Endothelial cell of umbilical vein (primary cell): ENCODE measurements at regions of chr19 and their contacts with region 1.

Region 1: GRCh38 chr19:44113138-44113783 is at the start of gene ZNF225:
- DNase-seq: peak; percentile 98
- H3K4me3 ChIP-seq: peak within 1 kb of the TSS; percentile 80 to 94 (median 84)
- H3K27ac ChIP-seq: peak within 1 kb of the TSS; percentile 32
- H3K4me1 ChIP-seq: peaks cover 6% of the 10 kb centered on the region
- H3K27me3 ChIP-seq: no peaks in the 10 kb centered on the region
- CTCF ChIP-seq: no peak
- POLR2A ChIP-seq: peak; percentile 85
- total RNA-seq, gene ZNF225: 3.9 and 4.1 TPM in 2 replicates

Region 2: GRCh38 chr19:43934985-43935708 is 178.1 kb before region 1 on chr19 and contains the start of gene ZNF45:
- CTCF ChIA-PET with region 1: interaction called, 3 read pairs
- POLR2A ChIA-PET with region 1: no interaction called
- dilution Hi-C with region 1: no loop called
- intact Hi-C with region 1: loop called (anchors 2 kb)
- DNase-seq: peak; percentile 93
- H3K4me3 ChIP-seq: peak within 1 kb of the TSS; percentile 43 to 94 (median 71)
- H3K27ac ChIP-seq: peak within 1 kb of the TSS; percentile 26
- H3K4me1 ChIP-seq: peaks cover 13% of the 10 kb centered on the region
- H3K27me3 ChIP-seq: no peaks in the 10 kb centered on the region
- CTCF ChIP-seq: no peak
- POLR2A ChIP-seq: peak; percentile 53
- total RNA-seq, gene ZNF45: 10.8 and 11.2 TPM in 2 replicates

Region 3: GRCh38 chr19:43966079-43966694 is 147.1 kb before region 1 on chr19:
- CTCF ChIA-PET with region 1: no interaction called
- POLR2A ChIA-PET with region 1: no interaction called
- dilution Hi-C with region 1: no loop called
- intact Hi-C with region 1: no loop called
- DNase-seq: no peak
- H3K4me3 ChIP-seq: no peak overlapping the region
- H3K27ac ChIP-seq: no peak overlapping the region
- H3K4me1 ChIP-seq: no peaks in the 10 kb centered on the region
- H3K27me3 ChIP-seq: no peaks in the 10 kb centered on the region
- CTCF ChIP-seq: no peak
- POLR2A ChIP-seq: no peak

Region 4: GRCh38 chr19:44002566-44003460 is 110.4 kb before region 1 on chr19 and contains the start of gene ZNF230:
- CTCF ChIA-PET with region 1: no interaction called
- POLR2A ChIA-PET with region 1: interaction called, 3 read pairs
- dilution Hi-C with region 1: no loop called
- intact Hi-C with region 1: loop called (anchors 1 kb)
- DNase-seq: peak; percentile 96
- H3K4me3 ChIP-seq: peak within 1 kb of the TSS; percentile 59 to 86 (median 84)
- H3K27ac ChIP-seq: peak within 1 kb of the TSS; percentile 36
- H3K4me1 ChIP-seq: peaks cover 6% of the 10 kb centered on the region
- H3K27me3 ChIP-seq: no peaks in the 10 kb centered on the region
- CTCF ChIP-seq: no peak
- POLR2A ChIP-seq: peak; percentile 69
- total RNA-seq, gene ZNF230: 2.9 TPM in 2 replicates

Region 5: GRCh38 chr19:44042147-44042546 is 71.1 kb before region 1 on chr19:
- CTCF ChIA-PET with region 1: no interaction called
- POLR2A ChIA-PET with region 1: no interaction called
- dilution Hi-C with region 1: no loop called
- intact Hi-C with region 1: no loop called
- DNase-seq: no peak
- H3K4me3 ChIP-seq: no peak overlapping the region
- H3K27ac ChIP-seq: no peak overlapping the region
- H3K4me1 ChIP-seq: no peaks in the 10 kb centered on the region
- H3K27me3 ChIP-seq: peaks cover 0 to 4% of the 10 kb centered on the region in 2 experiments
- CTCF ChIP-seq: no peak
- POLR2A ChIP-seq: no peak

Region 6: GRCh38 chr19:44059229-44059628 is 54.0 kb before region 1 on chr19:
- CTCF ChIA-PET with region 1: no interaction called
- POLR2A ChIA-PET with region 1: no interaction called
- dilution Hi-C with region 1: no loop called
- intact Hi-C with region 1: no loop called
- DNase-seq: no peak
- H3K4me3 ChIP-seq: no peak overlapping the region
- H3K27ac ChIP-seq: no peak overlapping the region
- H3K4me1 ChIP-seq: no peaks in the 10 kb centered on the region
- H3K27me3 ChIP-seq: no peaks in the 10 kb centered on the region
- CTCF ChIP-seq: no peak
- POLR2A ChIP-seq: no peak

Region 7: GRCh38 chr19:44071824-44072542 is 41.3 kb before region 1 on chr19 and contains the start of gene ZNF284:
- CTCF ChIA-PET with region 1: no interaction called
- POLR2A ChIA-PET with region 1: no interaction called
- dilution Hi-C with region 1: no loop called
- intact Hi-C with region 1: loop called (anchors 1 kb)
- DNase-seq: peak; percentile 91
- H3K4me3 ChIP-seq: peak within 1 kb of the TSS; percentile 10 to 67 (median 55)
- H3K27ac ChIP-seq: peak within 1 kb of the TSS; percentile 14
- H3K4me1 ChIP-seq: peaks cover 10% of the 10 kb centered on the region
- H3K27me3 ChIP-seq: no peaks in the 10 kb centered on the region
- CTCF ChIP-seq: no peak
- POLR2A ChIP-seq: peak; percentile 64
- total RNA-seq, gene ZNF284: 2.4 and 2.7 TPM in 2 replicates

Region 8: DNA sequence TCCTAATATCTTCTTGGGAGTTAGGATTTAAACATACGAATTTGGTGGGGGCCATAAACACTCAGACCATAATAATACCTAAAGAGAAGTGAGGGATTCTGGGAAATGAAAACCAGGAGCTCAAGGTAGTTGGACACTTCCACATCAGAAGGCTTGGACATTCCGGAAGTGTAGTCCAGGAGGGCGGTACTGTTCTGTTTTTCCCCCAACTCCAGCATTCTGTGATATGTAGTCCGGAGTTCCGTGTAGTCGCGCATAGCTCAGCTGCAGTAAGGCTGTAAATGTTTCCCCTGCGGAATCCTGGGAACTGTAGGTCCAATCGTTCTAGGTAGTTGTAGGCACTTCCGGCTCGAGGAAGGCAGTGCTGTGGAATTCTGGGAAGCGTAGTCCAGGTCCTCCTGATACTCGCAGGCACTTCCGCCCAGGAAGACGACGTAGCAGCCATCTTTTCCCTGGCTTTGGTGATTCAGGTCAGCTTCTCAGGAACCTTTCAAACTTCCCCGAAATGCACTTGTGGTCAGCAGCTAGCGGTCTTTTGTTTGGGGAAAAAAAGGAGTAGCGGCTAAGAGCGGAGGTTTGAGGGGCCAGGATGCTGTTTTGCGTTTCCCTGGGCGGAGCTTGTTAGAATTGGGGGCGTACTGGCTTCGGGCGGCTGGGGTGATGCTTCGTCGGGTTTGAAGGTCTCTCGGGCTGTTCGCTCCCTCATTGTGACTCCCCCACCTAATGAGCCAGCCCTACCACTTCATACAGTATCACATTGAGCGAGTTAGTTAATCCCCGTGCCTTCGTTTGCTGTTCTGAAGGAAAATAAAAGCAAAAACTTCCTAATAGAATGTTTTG is 51.6 kb after region 1 on chr19 and contains the start of gene ZNF226:
- CTCF ChIA-PET with region 1: interaction called, 3 read pairs
- POLR2A ChIA-PET with region 1: no interaction called
- dilution Hi-C with region 1: no loop called
- intact Hi-C with region 1: loop called (anchors 1 kb)
- DNase-seq: peak; percentile 98
- H3K4me3 ChIP-seq: peak within 1 kb of the TSS; percentile 56 to 87 (median 66)
- H3K27ac ChIP-seq: peak within 1 kb of the TSS; percentile 74
- H3K4me1 ChIP-seq: peaks cover 3% of the 10 kb centered on the region
- H3K27me3 ChIP-seq: no peaks in the 10 kb centered on the region
- CTCF ChIP-seq: no peak
- POLR2A ChIP-seq: no peak
- total RNA-seq, gene ZNF226: 19.7 and 19.8 TPM in 2 replicates

Region 9: GRCh38 chr19:44260363-44261070 is 147.3 kb after region 1 on chr19:
- CTCF ChIA-PET with region 1: no interaction called
- POLR2A ChIA-PET with region 1: no interaction called
- dilution Hi-C with region 1: no loop called
- intact Hi-C with region 1: no loop called
- DNase-seq: no peak
- H3K4me3 ChIP-seq: peak overlapping the region in 2 of 3 experiments; percentile 44 to 48
- H3K27ac ChIP-seq: no peak overlapping the region
- H3K4me1 ChIP-seq: no peaks in the 10 kb centered on the region
- H3K27me3 ChIP-seq: no peaks in the 10 kb centered on the region
- CTCF ChIP-seq: no peak
- POLR2A ChIP-seq: no peak

Region 10: GRCh38 chr19:44304659-44305193 is 191.5 kb after region 1 on chr19 and contains the start of gene ZNF235:
- CTCF ChIA-PET with region 1: no interaction called
- POLR2A ChIA-PET with region 1: no interaction called
- dilution Hi-C with region 1: no loop called
- intact Hi-C with region 1: loop called (anchors 1 kb)
- DNase-seq: peak; percentile 97
- H3K4me3 ChIP-seq: peak within 1 kb of the TSS; percentile 76 to 95 (median 82)
- H3K27ac ChIP-seq: peak within 1 kb of the TSS; percentile 63
- H3K4me1 ChIP-seq: peaks cover 5% of the 10 kb centered on the region
- H3K27me3 ChIP-seq: no peaks in the 10 kb centered on the region
- CTCF ChIP-seq: no peak
- POLR2A ChIP-seq: peak; percentile 51
- total RNA-seq, gene ZNF235: 5.2 TPM in 2 replicates